H1 (cell line): ENCODE measurements at regions of chr1 and their contacts with region 1.

Region 1: DNA sequence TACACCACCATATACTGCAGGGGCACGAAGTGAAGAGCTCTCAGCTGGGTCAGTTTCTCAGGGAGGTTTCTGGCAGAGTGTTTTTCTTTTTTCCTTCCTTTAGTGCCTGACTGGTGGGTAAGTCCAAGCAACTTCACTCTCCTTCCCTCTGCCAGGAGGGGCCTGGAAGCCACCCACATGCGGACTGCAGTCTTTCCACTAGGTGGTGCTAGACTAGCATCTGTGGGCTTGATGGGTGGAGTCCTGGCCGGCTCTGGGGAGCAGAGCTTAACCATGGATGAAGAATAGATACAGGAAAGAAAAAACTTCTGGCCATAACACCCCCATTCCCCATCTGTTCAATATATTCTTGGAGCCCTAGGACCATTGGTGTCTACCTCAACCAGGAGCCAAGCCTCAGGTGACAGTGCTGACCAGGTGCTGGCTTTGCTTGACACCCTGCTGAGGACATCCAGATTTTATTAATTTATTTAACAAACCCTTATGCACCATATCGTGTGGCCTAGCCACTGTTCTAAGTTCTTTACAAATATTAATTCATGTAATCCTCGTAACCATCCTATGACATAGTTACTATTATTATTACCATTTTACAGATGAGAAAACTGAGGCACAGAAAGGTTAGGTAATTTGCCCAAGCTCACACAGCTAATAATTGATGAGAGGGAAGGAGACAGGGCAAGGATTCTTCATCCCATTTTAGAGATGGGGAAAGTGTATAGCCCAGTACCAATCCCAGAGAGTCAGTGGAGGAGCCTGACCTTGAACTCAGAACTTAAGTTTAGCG is 126.7 kb upstream of the CSF3R start:
- DNase-seq: peak; percentile 47 to 85
- H3K4me3 ChIP-seq: no peak overlapping the region
- H3K27ac ChIP-seq: no peak overlapping the region
- H3K4me1 ChIP-seq: no peaks in the 10 kb centered on the region; a peak in 1 of 7 replicates
- H3K27me3 ChIP-seq: peaks cover 0 to 2% (median 0%) of the 10 kb centered on the region in 4 experiments; a peak in 1 of 7 replicates
- CTCF ChIP-seq: peak; percentile 92 to 95 (median 93)
- EP300 ChIP-seq: no peak
- POLR2A ChIP-seq: no peak
- RAD21 ChIP-seq: peak; percentile 96 to 97

Region 2: DNA sequence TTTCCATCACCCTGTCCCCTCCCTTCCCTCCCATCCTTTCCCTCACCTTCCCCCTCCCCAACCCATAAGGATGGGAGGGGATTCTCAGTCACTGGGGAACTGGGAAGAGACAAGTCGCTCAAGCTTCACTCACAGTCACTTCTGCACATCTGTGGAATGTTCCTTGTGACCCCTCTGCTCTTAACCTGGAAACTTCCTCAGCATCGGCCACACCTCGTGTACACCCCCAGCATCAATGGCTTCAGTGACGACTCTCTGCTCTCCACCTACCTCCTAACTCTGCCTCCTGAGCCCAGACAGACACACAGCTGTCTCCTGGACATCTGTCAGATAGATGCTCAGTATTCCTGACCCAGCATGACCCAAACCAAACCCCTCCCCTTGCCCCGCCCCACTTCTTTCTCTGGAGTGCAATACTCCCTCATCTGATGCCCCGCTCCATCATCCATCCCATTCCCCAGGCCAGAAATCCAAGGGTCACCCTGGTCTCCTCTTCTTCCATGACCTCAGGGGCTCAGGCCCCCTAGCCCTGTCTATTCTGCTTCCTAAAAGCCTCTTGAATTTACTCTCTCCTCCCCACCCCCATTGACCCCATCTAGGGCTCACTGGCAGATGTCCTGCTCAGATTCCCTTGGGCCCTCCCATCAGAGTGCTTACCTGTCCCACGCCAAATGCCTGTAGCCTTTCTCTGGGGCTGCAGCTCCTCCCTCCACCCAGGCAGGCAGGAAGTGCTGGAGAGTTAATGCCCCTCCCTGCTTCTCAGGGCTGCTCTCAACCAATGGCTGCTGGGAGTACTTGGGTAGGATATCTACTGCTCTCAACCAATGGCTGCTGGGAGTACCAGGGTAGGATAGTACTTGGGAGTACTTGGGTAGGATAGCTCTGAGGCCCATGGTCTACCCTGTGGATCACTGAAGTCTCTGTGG is 43.6 kb before region 1 on chr1:
- CTCF ChIA-PET with region 1: interaction called, 27 read pairs
- POLR2A ChIA-PET with region 1: no interaction called
- DNase-seq: peak in 1 of 2 experiments; percentile 42
- H3K4me3 ChIP-seq: no peak overlapping the region
- H3K27ac ChIP-seq: no peak overlapping the region
- H3K4me1 ChIP-seq: peaks cover 0 to 4% (median 0%) of the 10 kb centered on the region in 4 experiments; a peak in 2 of 7 replicates
- H3K27me3 ChIP-seq: no peaks in the 10 kb centered on the region; a peak in 2 of 7 replicates
- CTCF ChIP-seq: no peak
- EP300 ChIP-seq: no peak
- POLR2A ChIP-seq: no peak
- RAD21 ChIP-seq: no peak

Region 3: DNA sequence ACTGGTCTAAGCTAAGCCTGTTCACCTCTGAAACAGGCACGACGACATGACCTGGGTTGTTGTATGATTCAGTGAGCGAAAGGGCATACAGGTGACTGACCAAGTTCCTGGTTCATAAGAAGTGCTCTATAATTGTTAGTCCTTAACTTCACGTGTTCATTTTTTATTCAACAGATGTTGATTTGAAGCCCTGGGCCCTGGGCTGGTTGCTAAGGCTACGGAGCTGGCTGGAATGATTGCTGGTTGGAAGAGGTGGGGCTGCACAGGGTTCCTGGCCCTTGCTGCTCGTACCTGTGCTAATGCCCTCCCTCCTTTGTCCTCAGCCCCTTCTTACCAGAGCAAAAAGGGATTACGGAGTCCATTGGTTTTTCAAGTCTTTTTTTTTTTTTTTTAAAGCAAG is 15.4 kb before region 1 on chr1:
- CTCF ChIA-PET with region 1: interaction called, 94 read pairs
- POLR2A ChIA-PET with region 1: no interaction called
- DNase-seq: no peak
- H3K4me3 ChIP-seq: no peak overlapping the region
- H3K27ac ChIP-seq: no peak overlapping the region
- H3K4me1 ChIP-seq: peaks cover 0 to 10% (median 2%) of the 10 kb centered on the region in 4 experiments; a peak in 2 of 7 replicates
- H3K27me3 ChIP-seq: no peaks in the 10 kb centered on the region; a peak in 1 of 7 replicates
- CTCF ChIP-seq: no peak
- EP300 ChIP-seq: no peak
- POLR2A ChIP-seq: no peak
- RAD21 ChIP-seq: no peak

Region 4: DNA sequence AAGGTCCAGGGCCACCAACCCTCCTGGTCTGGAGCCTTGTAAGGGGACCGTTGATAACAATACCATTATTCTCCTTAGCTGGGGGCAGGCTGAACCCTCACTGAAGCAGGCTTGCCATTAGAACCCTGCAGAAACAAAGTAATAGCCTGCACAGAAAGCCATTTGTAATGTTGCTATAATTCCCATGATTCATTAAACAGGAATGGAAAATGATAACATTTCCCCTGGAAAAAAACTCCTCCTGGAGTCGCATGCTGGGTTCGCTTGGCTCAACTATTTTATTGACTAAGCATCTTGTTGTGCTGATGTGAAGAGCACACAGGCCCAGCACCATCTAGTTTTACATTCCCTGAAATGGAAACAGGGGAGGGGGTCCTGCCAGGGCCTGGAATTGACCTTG is 28.8 kb after region 1 on chr1:
- CTCF ChIA-PET with region 1: interaction called, 303 read pairs
- POLR2A ChIA-PET with region 1: no interaction called
- DNase-seq: no peak
- H3K4me3 ChIP-seq: no peak overlapping the region
- H3K27ac ChIP-seq: no peak overlapping the region
- H3K4me1 ChIP-seq: no peaks in the 10 kb centered on the region
- H3K27me3 ChIP-seq: no peaks in the 10 kb centered on the region
- CTCF ChIP-seq: no peak
- EP300 ChIP-seq: no peak
- POLR2A ChIP-seq: no peak
- RAD21 ChIP-seq: no peak

Region 5: DNA sequence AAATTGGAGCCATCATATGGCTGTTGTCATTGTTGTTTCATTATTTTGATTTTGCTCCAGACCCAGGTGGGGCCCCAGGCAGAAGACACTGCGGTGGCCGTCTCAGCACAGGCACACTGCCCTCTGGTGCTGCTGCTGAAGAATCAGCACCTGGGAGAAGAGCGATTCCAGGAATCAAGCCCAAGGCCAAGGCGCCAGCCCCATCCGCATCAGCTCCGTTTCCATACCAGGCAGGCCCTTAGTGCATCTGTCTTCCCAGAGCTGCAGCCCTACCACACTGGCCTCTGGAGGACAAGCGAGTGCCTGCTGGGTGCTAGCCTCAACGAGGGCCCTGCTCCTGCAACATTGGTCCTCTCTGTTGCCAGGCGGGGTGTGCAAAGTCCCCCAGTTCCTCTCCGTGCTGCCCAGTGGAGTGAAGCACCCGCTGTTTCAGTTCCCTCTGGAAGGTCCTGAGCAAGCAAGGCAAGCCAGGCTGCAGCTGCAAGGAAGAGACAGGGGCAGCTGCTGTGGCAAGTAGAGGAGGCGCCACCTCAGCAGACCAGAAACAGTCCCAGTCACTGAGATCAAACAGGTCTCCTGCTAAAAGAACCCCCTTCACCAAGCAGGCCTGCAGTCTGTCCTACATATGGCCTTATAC is 419.7 kb after region 1 on chr1:
- CTCF ChIA-PET with region 1: interaction called, 15 read pairs
- POLR2A ChIA-PET with region 1: no interaction called
- DNase-seq: peak in 1 of 2 experiments; percentile 54
- H3K4me3 ChIP-seq: no peak overlapping the region
- H3K27ac ChIP-seq: no peak overlapping the region
- H3K4me1 ChIP-seq: peaks cover 0 to 16% (median 13%) of the 10 kb centered on the region in 4 experiments; a peak in 6 of 7 replicates
- H3K27me3 ChIP-seq: peaks cover 32 to 49% (median 45%) of the 10 kb centered on the region in 4 experiments
- CTCF ChIP-seq: peak; percentile 69 to 74 (median 71)
- EP300 ChIP-seq: no peak
- POLR2A ChIP-seq: no peak
- RAD21 ChIP-seq: peak; percentile 80 to 83